Posterior vena cava (tissue), 2 donors: ENCODE measurements at regions of chr10 and their contacts with region 1.

Region 1: GRCh38 chr10:122112625-122113160 is 123.7 kb downstream of the TACC2 start:
- DNase-seq: peak; percentile 95

Region 2: GRCh38 chr10:122051251-122051996 is 61.3 kb before region 1 on chr10:
- intact Hi-C with region 1: loop called in 1 of 2 experiments (anchors 5 kb)
- DNase-seq: peak; percentile 62